BJ (cell line): ENCODE measurements at regions of chr19 and their contacts with region 1.

Region 1: GRCh38 chr19:17052439-17053210 is 22.6 kb downstream of the HAUS8 start:
- DNase-seq: no peak
- H3K4me3 ChIP-seq: no peak overlapping the region
- H3K27me3 ChIP-seq: no peaks in the 10 kb centered on the region
- CTCF ChIP-seq: peak; percentile 62

Region 2: DNA sequence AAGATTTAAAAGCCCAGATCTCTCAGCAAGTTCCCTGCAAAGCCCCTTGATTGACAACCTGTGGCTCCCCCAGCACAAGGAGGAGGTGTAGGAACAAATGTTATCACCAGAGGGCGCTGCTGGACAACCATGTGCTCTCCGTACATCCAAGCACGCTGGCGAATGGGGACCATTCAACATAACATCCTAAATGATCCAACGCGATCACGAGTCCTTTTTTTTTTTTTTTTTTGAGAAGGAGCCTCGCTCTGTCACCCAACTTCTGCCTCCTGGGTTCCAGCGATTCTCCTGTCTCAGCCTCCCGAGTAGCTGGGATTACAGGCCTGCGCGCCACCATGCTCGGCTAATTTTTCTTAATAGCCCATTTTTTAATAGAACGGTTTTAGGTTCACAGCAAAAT is 281.0 kb before region 1 on chr19:
- CTCF ChIA-PET with region 1: interaction called, 25 read pairs
- POLR2A ChIA-PET with region 1: no interaction called
- DNase-seq: peak; percentile 10
- H3K4me3 ChIP-seq: no peak overlapping the region
- H3K27me3 ChIP-seq: peaks cover 2% of the 10 kb centered on the region
- CTCF ChIP-seq: peak; percentile 77

Region 3: DNA sequence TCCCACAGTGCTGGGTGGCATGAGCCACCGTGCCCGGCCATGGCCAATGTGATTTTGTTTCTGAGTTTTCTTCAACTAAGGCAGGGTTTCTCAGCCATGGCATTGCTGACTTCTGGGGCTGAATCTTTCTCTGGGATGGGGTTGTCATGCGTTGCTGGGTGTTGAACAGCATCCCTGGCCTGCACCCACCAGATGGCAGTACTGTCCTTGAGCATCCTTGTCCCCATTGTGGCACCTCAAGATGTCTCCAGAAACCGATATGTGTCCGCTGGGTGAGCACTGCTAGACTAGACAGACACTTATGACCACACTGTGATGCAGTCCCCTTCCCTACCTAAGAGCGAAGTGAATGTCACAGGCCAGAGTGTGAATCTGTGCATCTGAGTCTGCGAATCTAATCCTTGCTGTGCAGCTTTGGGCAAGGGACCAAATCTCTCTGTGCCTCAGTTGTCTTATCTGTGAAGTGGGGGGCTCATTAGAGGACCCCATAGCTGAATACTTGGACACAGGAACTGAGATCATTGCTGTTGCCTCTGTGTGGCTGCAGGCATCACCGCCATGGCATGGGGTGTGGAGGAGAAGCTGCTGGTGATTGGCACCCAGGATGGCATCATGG is 273.7 kb before region 1 on chr19:
- CTCF ChIA-PET with region 1: interaction called, 31 read pairs
- POLR2A ChIA-PET with region 1: no interaction called
- DNase-seq: no peak
- H3K4me3 ChIP-seq: no peak overlapping the region
- H3K27me3 ChIP-seq: peaks cover 1% of the 10 kb centered on the region
- CTCF ChIP-seq: peak; percentile 76

Region 4: GRCh38 chr19:16944626-16945363 is 107.8 kb before region 1 on chr19:
- CTCF ChIA-PET with region 1: no interaction called
- POLR2A ChIA-PET with region 1: no interaction called
- DNase-seq: no peak
- H3K4me3 ChIP-seq: no peak overlapping the region
- H3K27me3 ChIP-seq: no peaks in the 10 kb centered on the region
- CTCF ChIP-seq: no peak

Region 5: GRCh38 chr19:17305517-17306284 is 253.1 kb after region 1 on chr19 and contains the start of gene MRPL34:
- CTCF ChIA-PET with region 1: no interaction called
- POLR2A ChIA-PET with region 1: interaction called, 16 read pairs
- DNase-seq: peak; percentile 94
- H3K4me3 ChIP-seq: peak within 1 kb of the TSS; percentile 79
- H3K27me3 ChIP-seq: no peaks in the 10 kb centered on the region
- CTCF ChIP-seq: peak; percentile 92
- polyA plus RNA-seq, gene MRPL34: 19.9 and 26.3 TPM in 2 replicates